CD8-positive, alpha-beta memory T cell (primary cell): ENCODE measurements at regions of chrX and their contacts with region 1.

Region 1: DNA sequence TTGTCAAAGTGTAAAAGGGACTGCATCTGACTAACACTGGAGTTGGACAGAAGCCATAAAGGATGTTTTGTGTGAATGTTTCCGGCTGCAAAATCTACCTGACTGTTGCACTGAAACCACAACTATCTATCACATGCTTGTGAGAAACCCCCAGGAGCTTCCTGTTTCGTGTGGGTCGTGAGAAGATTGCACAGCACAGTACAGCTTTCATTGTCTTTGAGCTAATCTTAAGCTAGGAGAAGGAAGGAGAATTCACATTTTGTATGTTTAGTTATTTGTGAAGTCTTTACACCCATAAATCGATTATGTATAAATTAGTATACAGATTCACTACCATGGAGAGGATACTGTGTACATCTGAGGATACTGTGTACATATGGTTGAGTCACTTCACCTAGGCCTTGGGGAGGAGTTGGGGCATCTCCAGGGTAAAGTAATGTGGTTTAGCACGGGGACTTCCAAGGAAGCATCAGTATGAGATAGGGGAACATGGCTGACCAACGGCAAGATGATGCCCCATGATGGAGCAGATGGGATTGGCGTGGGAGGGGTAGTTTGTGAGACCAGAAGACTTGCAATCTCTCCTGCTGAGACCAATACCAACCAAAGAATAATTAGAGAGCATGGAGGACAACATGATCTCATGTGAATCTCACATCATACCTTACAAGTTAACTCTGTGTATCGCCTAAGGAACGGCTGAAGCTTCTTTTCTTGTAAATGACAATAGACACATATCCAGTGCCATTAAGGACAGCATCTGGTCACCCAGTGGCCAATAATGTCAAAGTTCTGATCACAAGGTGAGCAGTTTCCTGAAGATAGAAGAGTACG is 43.1 kb upstream of the FAM9C start:
- DNase-seq: peak in 4 of 5 donors; percentile 59 to 90 (median 86)
- H3K4me3 ChIP-seq: peak overlapping the region; percentile 35
- H3K4me3 Mint-ChIP-seq: peak overlapping the region; percentile 57 to 87 (median 81)
- H3K27ac ChIP-seq: peak overlapping the region; percentile 68
- H3K27ac Mint-ChIP-seq: peak overlapping the region; percentile 96 to 99 (median 98)
- H3K4me1 ChIP-seq: peaks cover 94% of the 10 kb centered on the region
- H3K4me1 Mint-ChIP-seq: peaks cover 84 to 99% (median 97%) of the 10 kb centered on the region in 3 donors
- H3K27me3 ChIP-seq: no peaks in the 10 kb centered on the region
- H3K27me3 Mint-ChIP-seq: peaks cover 0 to 11% of the 10 kb centered on the region in 2 donors

Region 2: GRCh38 chrX:12946838-12947544 is 140.5 kb before region 1 on chrX:
- CTCF ChIA-PET with region 1: interaction called, 56 read pairs
- POLR2A ChIA-PET with region 1: interaction called, 11 read pairs
- DNase-seq: peak; percentile 49 to 79 (median 73)
- H3K4me3 ChIP-seq: peak overlapping the region; percentile 44
- H3K4me3 Mint-ChIP-seq: peak overlapping the region in 6 of 7 donors; percentile 10 to 83 (median 72)
- H3K27ac ChIP-seq: peak overlapping the region; percentile 16
- H3K27ac Mint-ChIP-seq: peak overlapping the region; percentile 82 to 98 (median 95)
- H3K4me1 ChIP-seq: peaks cover 50% of the 10 kb centered on the region
- H3K4me1 Mint-ChIP-seq: peaks cover 53 to 60% (median 56%) of the 10 kb centered on the region in 3 donors
- H3K27me3 ChIP-seq: no peaks in the 10 kb centered on the region
- H3K27me3 Mint-ChIP-seq: peaks cover 0 to 13% of the 10 kb centered on the region in 2 donors

Region 3: GRCh38 chrX:12955882-12956703 is 131.4 kb before region 1 on chrX:
- CTCF ChIA-PET with region 1: interaction called, 56 read pairs
- POLR2A ChIA-PET with region 1: interaction called, 11 read pairs
- DNase-seq: peak; percentile 44 to 84 (median 73)
- H3K4me3 ChIP-seq: peak overlapping the region; percentile 67
- H3K4me3 Mint-ChIP-seq: peak overlapping the region; percentile 75 to 92 (median 88)
- H3K27ac ChIP-seq: peak overlapping the region; percentile 87
- H3K27ac Mint-ChIP-seq: peak overlapping the region; percentile 96 to 100 (median 98)
- H3K4me1 ChIP-seq: peaks cover 80% of the 10 kb centered on the region
- H3K4me1 Mint-ChIP-seq: peaks cover 82 to 91% (median 83%) of the 10 kb centered on the region in 3 donors
- H3K27me3 ChIP-seq: no peaks in the 10 kb centered on the region
- H3K27me3 Mint-ChIP-seq: peaks cover 0 to under 1% of the 10 kb centered on the region in 2 donors

Region 4: GRCh38 chrX:13000301-13000811 is 87.2 kb before region 1 on chrX:
- CTCF ChIA-PET with region 1: interaction called, 13 read pairs
- POLR2A ChIA-PET with region 1: interaction called, 11 read pairs
- DNase-seq: peak in 3 of 5 donors; percentile 45 to 68 (median 59)
- H3K4me3 ChIP-seq: peak overlapping the region; percentile 38
- H3K4me3 Mint-ChIP-seq: peak overlapping the region; percentile 72 to 86 (median 75)
- H3K27ac ChIP-seq: peak overlapping the region; percentile 52
- H3K27ac Mint-ChIP-seq: peak overlapping the region; percentile 87 to 98 (median 92)
- H3K4me1 ChIP-seq: peaks cover 76% of the 10 kb centered on the region
- H3K4me1 Mint-ChIP-seq: peaks cover 65 to 87% (median 85%) of the 10 kb centered on the region in 3 donors
- H3K27me3 ChIP-seq: no peaks in the 10 kb centered on the region
- H3K27me3 Mint-ChIP-seq: peaks cover 0 to 6% of the 10 kb centered on the region in 2 donors

Region 5: DNA sequence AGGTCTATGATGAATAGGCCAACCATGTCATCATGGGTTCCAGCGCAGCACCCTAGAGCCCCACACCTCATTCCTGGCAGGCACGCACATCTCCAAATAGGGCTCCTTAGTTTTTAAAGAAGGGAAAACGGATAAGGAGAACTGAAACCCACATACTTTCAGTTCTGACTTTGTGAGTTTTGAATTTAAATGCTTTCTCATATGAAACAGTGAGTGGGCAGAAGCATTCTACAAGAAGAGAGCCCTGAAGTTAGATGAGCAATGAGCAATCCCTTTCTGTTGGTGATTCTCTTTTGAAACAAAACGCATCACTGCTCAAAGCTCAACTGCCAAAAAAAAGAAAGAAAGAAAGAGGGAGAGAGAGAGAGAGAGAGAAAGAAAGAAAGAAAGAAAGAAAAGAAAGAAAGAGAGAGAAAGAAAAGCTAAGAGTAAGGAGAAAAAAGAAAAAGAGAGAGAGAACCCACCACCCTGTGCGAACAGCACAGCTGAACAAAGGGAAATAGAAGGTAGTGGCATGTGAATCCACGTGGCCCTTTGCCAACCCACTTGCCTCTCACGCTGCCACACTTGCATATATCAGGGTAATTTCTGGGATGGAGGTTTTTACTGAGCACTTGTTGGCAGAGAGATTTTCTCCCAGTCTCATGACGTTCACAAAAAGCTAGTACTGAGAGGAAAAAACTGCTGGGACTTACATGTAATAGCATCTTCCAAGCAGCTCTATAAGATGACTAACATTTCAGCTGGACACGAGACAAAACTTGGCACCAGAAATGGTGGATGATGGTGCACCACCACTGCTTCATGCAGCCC is 81.7 kb before region 1 on chrX:
- CTCF ChIA-PET with region 1: interaction called, 13 read pairs
- POLR2A ChIA-PET with region 1: interaction called, 11 read pairs
- DNase-seq: no peak
- H3K4me3 ChIP-seq: no peak overlapping the region
- H3K4me3 Mint-ChIP-seq: peak overlapping the region; percentile 56 to 75 (median 64)
- H3K27ac ChIP-seq: no peak overlapping the region
- H3K27ac Mint-ChIP-seq: peak overlapping the region; percentile 84 to 96 (median 91)
- H3K4me1 ChIP-seq: peaks cover 69% of the 10 kb centered on the region
- H3K4me1 Mint-ChIP-seq: peaks cover 45 to 80% (median 72%) of the 10 kb centered on the region in 3 donors
- H3K27me3 ChIP-seq: no peaks in the 10 kb centered on the region
- H3K27me3 Mint-ChIP-seq: peaks cover 0 to 10% of the 10 kb centered on the region in 2 donors

Region 6: GRCh38 chrX:13051529-13052172 is 35.9 kb before region 1 on chrX:
- CTCF ChIA-PET with region 1: interaction called, 21 read pairs
- POLR2A ChIA-PET with region 1: interaction called, 19 read pairs
- DNase-seq: peak in 3 of 5 donors; percentile 46 to 78 (median 58)
- H3K4me3 ChIP-seq: no peak overlapping the region
- H3K4me3 Mint-ChIP-seq: peak overlapping the region; percentile 8 to 69 (median 51)
- H3K27ac ChIP-seq: peak overlapping the region; percentile 21
- H3K27ac Mint-ChIP-seq: peak overlapping the region; percentile 61 to 97 (median 90)
- H3K4me1 ChIP-seq: peaks cover 84% of the 10 kb centered on the region
- H3K4me1 Mint-ChIP-seq: peaks cover 61 to 84% (median 83%) of the 10 kb centered on the region in 3 donors
- H3K27me3 ChIP-seq: no peaks in the 10 kb centered on the region
- H3K27me3 Mint-ChIP-seq: peaks cover 0 to 7% of the 10 kb centered on the region in 2 donors

Region 7: DNA sequence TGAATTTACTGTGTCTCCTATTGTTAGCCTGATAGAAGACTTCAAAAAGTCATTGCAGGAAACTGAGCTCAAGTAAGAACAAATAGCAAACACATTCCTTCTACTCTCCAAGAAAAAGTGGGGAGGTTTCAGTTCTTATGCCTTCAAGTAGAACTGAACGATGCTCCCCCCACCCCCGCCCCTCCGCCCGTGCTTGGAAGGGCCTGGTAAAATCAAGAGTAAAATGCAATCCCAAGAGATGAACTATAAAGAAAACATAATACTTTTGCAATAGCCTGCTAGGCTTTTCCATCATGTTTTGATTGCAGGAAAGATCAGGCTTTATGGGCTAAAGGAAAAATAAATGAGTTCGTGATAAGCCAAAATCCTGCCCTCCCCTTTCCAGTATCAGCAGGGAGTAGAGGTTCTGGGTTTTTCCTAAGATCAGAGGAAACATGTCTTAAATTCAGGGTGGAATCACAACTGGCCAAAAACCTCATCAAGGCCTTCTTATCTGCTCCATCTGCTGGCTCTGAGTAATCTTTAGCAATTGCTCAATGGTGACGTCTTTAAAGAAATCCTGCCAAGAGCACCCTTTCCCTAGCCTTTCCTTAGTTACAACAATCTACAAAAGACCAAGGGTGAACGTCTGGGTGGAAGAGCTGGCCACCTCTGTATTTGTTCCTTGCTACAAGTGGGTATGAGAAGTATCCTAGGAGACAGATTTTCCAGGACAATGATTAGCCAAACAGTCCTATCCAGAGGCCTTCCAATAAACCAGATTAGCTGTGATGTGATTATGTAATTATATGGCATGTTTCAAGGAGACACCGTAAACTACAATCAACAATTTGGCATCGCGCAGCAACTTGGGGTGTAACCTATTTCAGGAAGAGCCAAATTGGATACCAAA is 23.1 kb after region 1 on chrX:
- CTCF ChIA-PET with region 1: no interaction called
- POLR2A ChIA-PET with region 1: no interaction called
- DNase-seq: no peak
- H3K4me3 ChIP-seq: no peak overlapping the region
- H3K4me3 Mint-ChIP-seq: no peak overlapping the region
- H3K27ac ChIP-seq: no peak overlapping the region
- H3K27ac Mint-ChIP-seq: peak overlapping the region in 1 of 8 donors; percentile 45
- H3K4me1 ChIP-seq: no peaks in the 10 kb centered on the region
- H3K4me1 Mint-ChIP-seq: peaks cover 0 to 5% (median 0%) of the 10 kb centered on the region in 3 donors
- H3K27me3 ChIP-seq: no peaks in the 10 kb centered on the region
- H3K27me3 Mint-ChIP-seq: peaks cover 0 to 14% of the 10 kb centered on the region in 2 donors

Region 8: DNA sequence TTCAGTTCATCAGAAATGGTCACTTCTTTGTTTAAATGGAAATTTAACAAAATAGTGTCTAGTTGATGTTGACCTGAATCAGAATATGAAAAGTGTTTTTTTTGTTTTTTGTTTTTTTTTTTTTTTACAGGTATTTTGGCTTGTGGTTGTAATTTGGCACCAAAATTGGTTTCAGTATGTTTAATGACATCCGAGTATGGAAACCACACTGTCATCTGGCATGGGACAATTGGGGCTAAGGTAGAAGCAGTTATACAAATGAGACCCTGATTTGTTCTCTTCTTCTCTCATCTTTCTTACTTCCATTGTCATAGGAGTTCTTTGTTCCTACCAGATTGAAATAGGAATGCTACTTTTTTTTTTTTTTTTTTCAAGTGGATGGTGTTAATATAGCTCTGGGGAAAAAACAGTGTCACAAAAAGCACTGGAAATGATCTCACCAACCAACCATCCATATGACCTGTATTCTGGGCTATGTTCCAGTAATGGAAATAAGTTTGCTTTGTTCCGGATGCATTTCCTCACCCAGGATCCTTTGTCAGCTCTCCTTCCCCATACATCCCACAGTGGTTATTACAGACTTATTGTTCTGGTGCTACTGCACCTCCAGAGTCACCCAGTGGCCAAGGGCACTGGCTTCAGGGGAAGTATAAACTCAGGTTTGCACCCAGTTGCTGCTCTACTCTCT is 136.5 kb after region 1 on chrX:
- CTCF ChIA-PET with region 1: no interaction called
- POLR2A ChIA-PET with region 1: no interaction called
- DNase-seq: peak in 1 of 5 donors; percentile 1
- H3K4me3 ChIP-seq: no peak overlapping the region
- H3K4me3 Mint-ChIP-seq: no peak overlapping the region
- H3K27ac ChIP-seq: no peak overlapping the region
- H3K27ac Mint-ChIP-seq: no peak overlapping the region
- H3K4me1 ChIP-seq: no peaks in the 10 kb centered on the region
- H3K4me1 Mint-ChIP-seq: peaks cover 5 to 19% (median 13%) of the 10 kb centered on the region in 3 donors
- H3K27me3 ChIP-seq: no peaks in the 10 kb centered on the region
- H3K27me3 Mint-ChIP-seq: peaks cover 0 to 15% of the 10 kb centered on the region in 2 donors

Region 9: DNA sequence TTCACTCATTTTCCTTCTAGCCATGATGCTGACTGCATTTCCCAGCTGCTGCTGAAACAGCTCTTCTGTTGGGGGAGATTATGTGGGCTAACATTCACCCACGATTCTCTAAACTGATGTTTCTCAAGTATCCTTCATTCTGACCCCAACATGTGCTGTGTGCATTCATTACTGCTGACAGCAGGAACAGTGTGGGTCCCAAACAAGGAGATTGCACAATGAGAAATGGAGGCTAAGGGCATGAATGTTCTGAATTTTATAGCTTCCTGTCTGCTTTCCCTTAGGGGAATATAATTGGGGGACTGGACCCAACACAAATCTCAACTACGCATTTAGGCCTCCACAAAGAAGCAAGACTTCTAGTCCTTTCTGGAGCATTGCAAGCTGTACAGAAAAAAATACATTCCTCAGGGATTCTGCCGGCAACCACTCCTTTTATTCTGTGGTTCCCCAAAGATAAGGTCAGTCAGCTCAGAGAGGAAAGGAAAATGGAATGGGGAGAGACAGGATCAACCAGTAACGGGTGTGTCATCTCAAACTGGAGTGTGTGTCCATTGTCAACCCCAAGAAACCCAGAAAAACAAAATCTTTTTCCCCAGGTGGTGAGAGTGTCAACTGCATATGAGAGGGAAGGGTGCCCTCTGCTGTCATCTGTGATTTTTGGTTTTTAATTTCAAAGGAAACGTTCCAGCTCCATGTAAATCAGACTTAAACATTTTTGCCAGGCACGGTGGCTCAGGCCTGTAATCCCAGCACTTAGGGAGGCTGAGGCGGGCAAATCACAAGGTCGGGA is 400.4 kb after region 1 on chrX:
- CTCF ChIA-PET with region 1: interaction called, 43 read pairs
- POLR2A ChIA-PET with region 1: interaction called, 4 read pairs
- DNase-seq: peak in 4 of 5 donors; percentile 1 to 52 (median 46)
- H3K4me3 ChIP-seq: no peak overlapping the region
- H3K4me3 Mint-ChIP-seq: peak overlapping the region in 3 of 7 donors; percentile 8 to 31 (median 17)
- H3K27ac ChIP-seq: no peak overlapping the region
- H3K27ac Mint-ChIP-seq: peak overlapping the region in 7 of 8 donors; percentile 50 to 87 (median 79)
- H3K4me1 ChIP-seq: peaks cover 22% of the 10 kb centered on the region
- H3K4me1 Mint-ChIP-seq: peaks cover 38 to 51% (median 50%) of the 10 kb centered on the region in 3 donors
- H3K27me3 ChIP-seq: no peaks in the 10 kb centered on the region
- H3K27me3 Mint-ChIP-seq: peaks cover 0 to 12% of the 10 kb centered on the region in 2 donors